B cell (primary cell): ENCODE measurements at regions of chr16 and their contacts with region 1.

Region 1: GRCh38 chr16:2155091-2156021 is at the start of gene TRAF7:
- DNase-seq: peak; percentile 100
- ATAC-seq: peak; percentile 93
- H3K4me3 ChIP-seq: peak within 1 kb of the TSS; percentile 71 to 100 (median 90)
- H3K4me3 Mint-ChIP-seq: peak within 1 kb of the TSS; percentile 93
- H3K27ac ChIP-seq: peak within 1 kb of the TSS; percentile 66 to 84
- H3K27ac Mint-ChIP-seq: peak within 1 kb of the TSS; percentile 81
- H3K4me1 ChIP-seq: peaks cover 43 to 76% of the 10 kb centered on the region in 2 donors
- H3K4me1 Mint-ChIP-seq: peaks cover 70% of the 10 kb centered on the region
- H3K27me3 ChIP-seq: no peaks in the 10 kb centered on the region
- H3K27me3 Mint-ChIP-seq: no peaks in the 10 kb centered on the region
- CTCF ChIP-seq: no peak
- total RNA-seq, gene TRAF7: 42.3 and 50.9 TPM in 2 replicates

Region 2: GRCh38 chr16:1991948-1992703 is 163.2 kb before region 1 on chr16:
- CTCF ChIA-PET with region 1: interaction called, 4 read pairs
- POLR2A ChIA-PET with region 1: interaction called, 6 read pairs
- intact Hi-C with region 1: loop called (anchors 1 kb)
- DNase-seq: peak; percentile 96
- ATAC-seq: peak; percentile 77
- H3K4me3 ChIP-seq: peak overlapping the region in 4 of 5 experiments; percentile 51 to 93 (median 69)
- H3K4me3 Mint-ChIP-seq: peak overlapping the region; percentile 91
- H3K27ac ChIP-seq: peak overlapping the region; percentile 86 to 92
- H3K27ac Mint-ChIP-seq: peak overlapping the region; percentile 97
- H3K4me1 ChIP-seq: peaks cover 24 to 35% of the 10 kb centered on the region in 2 donors
- H3K4me1 Mint-ChIP-seq: peaks cover 33% of the 10 kb centered on the region
- H3K27me3 ChIP-seq: no peaks in the 10 kb centered on the region
- H3K27me3 Mint-ChIP-seq: no peaks in the 10 kb centered on the region
- CTCF ChIP-seq: no peak

Region 3: GRCh38 chr16:2023098-2023925 is 132.0 kb before region 1 on chr16:
- CTCF ChIA-PET with region 1: interaction called, 35 read pairs
- POLR2A ChIA-PET with region 1: interaction called, 6 read pairs
- intact Hi-C with region 1: loop called (anchors 1 kb)
- DNase-seq: peak; percentile 94
- ATAC-seq: peak; percentile 94
- H3K4me3 ChIP-seq: peak overlapping the region in 4 of 5 experiments; percentile 34 to 57 (median 42)
- H3K4me3 Mint-ChIP-seq: peak overlapping the region; percentile 88
- H3K27ac ChIP-seq: no peak overlapping the region
- H3K27ac Mint-ChIP-seq: peak overlapping the region; percentile 85
- H3K4me1 ChIP-seq: peaks cover 34 to 41% of the 10 kb centered on the region in 2 donors
- H3K4me1 Mint-ChIP-seq: peaks cover 19% of the 10 kb centered on the region
- H3K27me3 ChIP-seq: peaks cover 0 to 64% (median 26%) of the 10 kb centered on the region in 4 experiments
- H3K27me3 Mint-ChIP-seq: peaks cover 25% of the 10 kb centered on the region
- CTCF ChIP-seq: peak; percentile 90

Region 4: GRCh38 chr16:2056681-2057407 is 98.5 kb before region 1 on chr16:
- CTCF ChIA-PET with region 1: no interaction called
- POLR2A ChIA-PET with region 1: no interaction called
- intact Hi-C with region 1: no loop called
- DNase-seq: no peak
- ATAC-seq: no peak
- H3K4me3 ChIP-seq: no peak overlapping the region
- H3K4me3 Mint-ChIP-seq: no peak overlapping the region
- H3K27ac ChIP-seq: no peak overlapping the region
- H3K27ac Mint-ChIP-seq: no peak overlapping the region
- H3K4me1 ChIP-seq: no peaks in the 10 kb centered on the region
- H3K4me1 Mint-ChIP-seq: no peaks in the 10 kb centered on the region
- H3K27me3 ChIP-seq: no peaks in the 10 kb centered on the region
- H3K27me3 Mint-ChIP-seq: no peaks in the 10 kb centered on the region
- CTCF ChIP-seq: no peak

Region 5: GRCh38 chr16:2205104-2205966 is 50.0 kb after region 1 on chr16 and contains the start of gene MLST8:
- CTCF ChIA-PET with region 1: interaction called, 5 read pairs
- POLR2A ChIA-PET with region 1: interaction called, 16 read pairs
- intact Hi-C with region 1: loop called (anchors 1 kb)
- DNase-seq: peak; percentile 98
- ATAC-seq: peak; percentile 90
- H3K4me3 ChIP-seq: peak within 1 kb of the TSS; percentile 73 to 94 (median 76)
- H3K4me3 Mint-ChIP-seq: peak within 1 kb of the TSS; percentile 87
- H3K27ac ChIP-seq: peak within 1 kb of the TSS; percentile 86 to 89
- H3K27ac Mint-ChIP-seq: peak within 1 kb of the TSS; percentile 94
- H3K4me1 ChIP-seq: peaks cover 12 to 22% of the 10 kb centered on the region in 2 donors
- H3K4me1 Mint-ChIP-seq: peaks cover 21% of the 10 kb centered on the region
- H3K27me3 ChIP-seq: no peaks in the 10 kb centered on the region
- H3K27me3 Mint-ChIP-seq: peaks cover 3% of the 10 kb centered on the region
- CTCF ChIP-seq: peak; percentile 32
- total RNA-seq, gene MLST8: 36.1 and 39.0 TPM in 2 replicates

Region 6: DNA sequence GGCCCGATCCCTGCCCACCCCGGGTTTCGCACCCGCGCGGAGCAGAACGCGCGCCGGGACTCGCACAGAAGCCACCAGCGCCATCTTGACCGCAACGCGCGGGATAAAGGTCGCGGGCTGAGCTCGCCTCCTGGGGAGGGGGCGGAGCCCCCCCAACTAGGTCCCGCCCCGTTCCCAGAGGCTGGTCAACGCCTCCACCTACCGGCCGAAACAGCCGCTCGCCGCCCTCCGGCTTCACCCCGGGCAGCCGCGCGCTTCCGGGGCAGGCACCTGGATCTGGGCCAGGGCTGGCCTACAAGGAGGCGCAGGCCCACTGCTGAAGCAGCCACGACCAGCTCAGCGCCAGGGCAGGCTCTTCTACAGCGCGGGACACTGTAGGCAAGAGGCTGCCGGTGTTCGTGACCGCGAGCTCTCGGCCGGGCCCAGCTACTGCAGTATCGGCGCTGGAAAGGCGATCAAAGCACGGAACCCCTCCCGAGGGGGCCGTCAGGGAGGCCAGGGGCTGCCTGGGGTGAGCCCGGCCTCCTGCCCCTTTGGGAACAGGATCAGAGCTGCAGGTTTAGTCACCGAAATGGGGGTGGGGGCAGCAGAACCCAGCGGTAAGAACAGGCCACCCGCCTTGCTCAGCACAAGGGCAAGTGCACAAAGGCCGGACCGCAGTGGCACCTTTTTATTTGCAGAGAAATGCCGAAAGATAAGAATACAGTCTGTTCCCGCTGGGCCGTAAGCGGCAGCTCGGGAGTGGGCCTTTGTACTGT is 96.3 kb after region 1 on chr16 and contains the start of gene ECI1:
- CTCF ChIA-PET with region 1: interaction called, 8 read pairs
- POLR2A ChIA-PET with region 1: interaction called, 9 read pairs
- intact Hi-C with region 1: loop called (anchors 1 kb)
- DNase-seq: peak; percentile 92
- ATAC-seq: peak; percentile 96
- H3K4me3 ChIP-seq: peak within 1 kb of the TSS; percentile 51 to 82 (median 68)
- H3K4me3 Mint-ChIP-seq: peak within 1 kb of the TSS; percentile 88
- H3K27ac ChIP-seq: peak within 1 kb of the TSS; percentile 68 to 72
- H3K27ac Mint-ChIP-seq: peak within 1 kb of the TSS; percentile 89
- H3K4me1 ChIP-seq: peaks cover 12 to 41% of the 10 kb centered on the region in 2 donors
- H3K4me1 Mint-ChIP-seq: peaks cover 26% of the 10 kb centered on the region
- H3K27me3 ChIP-seq: no peaks in the 10 kb centered on the region
- H3K27me3 Mint-ChIP-seq: no peaks in the 10 kb centered on the region
- CTCF ChIP-seq: peak; percentile 58
- total RNA-seq, gene ECI1: 38.4 and 46.4 TPM in 2 replicates

Region 7: GRCh38 chr16:2404099-2404498 is 248.7 kb after region 1 on chr16:
- CTCF ChIA-PET with region 1: no interaction called
- POLR2A ChIA-PET with region 1: no interaction called
- intact Hi-C with region 1: no loop called
- DNase-seq: no peak
- ATAC-seq: no peak
- H3K4me3 ChIP-seq: no peak overlapping the region
- H3K4me3 Mint-ChIP-seq: no peak overlapping the region
- H3K27ac ChIP-seq: no peak overlapping the region
- H3K27ac Mint-ChIP-seq: no peak overlapping the region
- H3K4me1 ChIP-seq: no peaks in the 10 kb centered on the region
- H3K4me1 Mint-ChIP-seq: no peaks in the 10 kb centered on the region
- H3K27me3 ChIP-seq: no peaks in the 10 kb centered on the region
- H3K27me3 Mint-ChIP-seq: peaks cover 15% of the 10 kb centered on the region
- CTCF ChIP-seq: no peak

Region 8: GRCh38 chr16:2839651-2840450 is 684.5 kb after region 1 on chr16:
- CTCF ChIA-PET with region 1: no interaction called
- POLR2A ChIA-PET with region 1: interaction called, 10 read pairs
- intact Hi-C with region 1: no loop called
- DNase-seq: no peak
- ATAC-seq: no peak
- H3K4me3 ChIP-seq: no peak overlapping the region
- H3K4me3 Mint-ChIP-seq: no peak overlapping the region
- H3K27ac ChIP-seq: no peak overlapping the region
- H3K27ac Mint-ChIP-seq: no peak overlapping the region
- H3K4me1 ChIP-seq: peaks cover 15 to 29% of the 10 kb centered on the region in 2 donors
- H3K4me1 Mint-ChIP-seq: peaks cover 8% of the 10 kb centered on the region
- H3K27me3 ChIP-seq: peaks cover 0 to 27% (median 0%) of the 10 kb centered on the region in 4 experiments
- H3K27me3 Mint-ChIP-seq: peaks cover 27% of the 10 kb centered on the region
- CTCF ChIP-seq: no peak